Common myeloid progenitor, CD34-positive (primary cell): ENCODE measurements at regions of chr13 and their contacts with region 1.

Region 1: DNA sequence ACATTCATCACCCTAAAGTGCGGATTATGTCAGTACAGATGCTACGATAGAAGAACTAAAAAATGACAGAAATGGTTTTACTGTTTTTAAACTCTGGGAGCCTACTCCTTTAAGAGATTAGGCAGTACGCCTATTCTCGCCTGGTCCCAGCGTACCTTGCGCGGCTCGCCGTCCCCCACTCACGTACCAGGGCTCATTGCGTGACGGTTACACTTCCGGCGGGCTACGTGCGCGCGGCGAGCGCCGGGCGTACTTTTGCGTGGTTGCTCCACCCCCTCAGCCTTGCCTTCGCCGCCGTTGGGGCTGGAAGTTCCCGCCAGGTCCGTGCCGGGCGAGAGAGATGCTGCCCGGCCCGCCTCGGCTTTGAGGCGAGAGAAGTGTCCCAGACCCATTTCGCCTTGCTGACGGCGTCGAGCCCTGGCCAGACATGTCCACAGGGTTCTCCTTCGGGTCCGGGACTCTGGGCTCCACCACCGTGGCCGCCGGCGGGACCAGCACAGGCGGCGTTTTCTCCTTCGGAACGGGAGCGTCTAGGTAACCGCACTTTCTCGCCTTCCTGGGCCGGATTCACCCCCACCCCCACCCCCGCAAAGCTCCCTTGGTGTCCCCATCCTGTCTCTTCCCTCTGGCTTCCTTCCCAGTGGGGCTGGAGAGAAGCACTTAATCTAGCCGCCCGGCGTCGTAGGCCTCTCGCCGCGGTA is at the start of gene NUP58:
- DNase-seq: peak; percentile 95 to 98 (median 97)
- H3K4me3 ChIP-seq: peak within 1 kb of the TSS; percentile 79 to 95 (median 91)
- H3K27ac ChIP-seq: peak within 1 kb of the TSS; percentile 93 to 96
- H3K4me1 ChIP-seq: peaks cover 9 to 21% (median 15%) of the 10 kb centered on the region in 4 experiments
- H3K27me3 ChIP-seq: peaks cover 0 to 7% (median 0%) of the 10 kb centered on the region in 5 experiments

Region 2: DNA sequence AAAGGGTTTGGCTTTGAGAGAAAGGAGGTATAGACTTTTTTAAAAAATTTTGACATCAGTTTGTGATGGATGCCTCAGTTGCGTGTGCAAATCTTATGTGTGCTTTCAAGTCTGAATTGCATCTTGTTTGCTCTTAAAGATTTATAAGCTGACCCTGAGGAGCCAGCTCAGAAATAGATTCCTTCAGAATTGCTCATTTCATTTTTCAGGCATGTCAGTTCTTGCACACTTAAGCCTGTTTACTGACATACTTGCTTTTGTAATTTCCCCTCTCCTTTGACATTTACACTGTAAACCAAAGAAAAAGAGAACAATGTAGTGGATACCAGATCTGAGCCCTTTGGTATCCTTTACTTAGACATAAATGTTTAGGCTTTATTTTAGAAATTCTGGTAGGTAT is 450.0 kb before region 1 on chr13:
- CTCF ChIA-PET with region 1: no interaction called
- POLR2A ChIA-PET with region 1: no interaction called
- DNase-seq: no peak
- H3K4me3 ChIP-seq: no peak overlapping the region
- H3K27ac ChIP-seq: no peak overlapping the region
- H3K4me1 ChIP-seq: no peaks in the 10 kb centered on the region
- H3K27me3 ChIP-seq: no peaks in the 10 kb centered on the region

Region 3: GRCh38 chr13:25319771-25320170 is 18.3 kb after region 1 on chr13:
- CTCF ChIA-PET with region 1: interaction called, 15 read pairs
- POLR2A ChIA-PET with region 1: no interaction called
- DNase-seq: no peak
- H3K4me3 ChIP-seq: no peak overlapping the region
- H3K27ac ChIP-seq: no peak overlapping the region
- H3K4me1 ChIP-seq: no peaks in the 10 kb centered on the region
- H3K27me3 ChIP-seq: no peaks in the 10 kb centered on the region

Region 4: DNA sequence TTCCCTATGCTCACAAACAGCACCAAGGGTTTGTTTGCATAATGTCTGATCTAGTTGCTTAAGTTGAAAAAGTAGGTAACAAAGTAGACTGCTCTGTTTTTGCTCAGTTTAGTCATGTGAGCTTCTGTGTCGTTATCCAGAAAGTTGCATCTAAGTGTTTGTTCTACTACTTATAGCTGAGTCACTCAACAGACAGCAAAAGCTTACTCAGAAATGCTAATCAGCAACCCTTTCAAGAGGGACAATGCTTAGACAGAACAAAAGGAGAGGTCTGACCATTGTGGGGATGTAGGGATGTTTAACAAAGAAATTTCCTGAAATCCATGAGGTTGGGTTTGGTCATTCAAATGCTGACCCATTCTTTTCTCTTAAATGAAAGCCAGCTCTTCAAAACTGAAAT is 176.7 kb after region 1 on chr13:
- CTCF ChIA-PET with region 1: no interaction called
- POLR2A ChIA-PET with region 1: no interaction called
- DNase-seq: no peak
- H3K4me3 ChIP-seq: no peak overlapping the region
- H3K27ac ChIP-seq: no peak overlapping the region
- H3K4me1 ChIP-seq: no peaks in the 10 kb centered on the region
- H3K27me3 ChIP-seq: peaks cover 0 to 4% (median 1%) of the 10 kb centered on the region in 5 experiments